Aorta (tissue), 5 donors: ENCODE measurements at regions of chr15 and their contacts with region 1.

Region 1: DNA sequence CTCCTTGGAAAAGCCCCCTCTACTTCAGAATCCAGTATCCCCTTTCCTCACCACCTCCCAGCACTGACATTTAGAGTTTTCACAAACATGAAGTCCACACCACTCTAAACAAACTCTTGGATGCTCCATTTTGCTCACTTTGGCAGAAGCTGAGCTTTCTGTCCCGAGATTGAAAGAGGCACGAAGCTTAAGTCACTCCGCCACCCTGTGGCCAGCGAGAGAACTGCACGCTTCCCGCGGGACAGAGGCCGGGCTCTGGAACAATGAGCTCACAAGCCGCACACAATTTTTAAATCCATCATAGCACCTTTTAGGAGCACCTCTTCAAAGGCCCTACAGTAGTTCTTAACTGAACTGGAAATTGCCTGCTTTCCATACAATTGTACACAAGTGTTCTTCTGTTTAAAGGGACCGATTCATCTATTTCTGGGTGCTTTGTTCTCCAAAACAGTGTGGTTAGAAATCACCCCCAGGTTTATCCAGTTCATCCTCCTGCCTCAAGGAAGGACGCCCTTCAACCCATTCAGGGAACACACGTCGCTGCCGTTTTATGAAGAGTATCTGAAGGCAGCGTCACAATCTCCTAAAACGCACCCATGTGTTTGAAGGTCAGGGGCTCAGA is 226.1 kb downstream of the VPS13C start:
- DNase-seq: peak; percentile 81 to 93
- ATAC-seq: peak; percentile 87
- H3K4me3 ChIP-seq: no peak overlapping the region
- H3K27ac ChIP-seq: no peak overlapping the region
- H3K4me1 ChIP-seq: no peaks in the 10 kb centered on the region
- H3K27me3 ChIP-seq: no peaks in the 10 kb centered on the region

Region 2: GRCh38 chr15:60507596-60508424 is 1326.4 kb before region 1 on chr15:
- intact Hi-C with region 1: loop called (anchors 10 kb)
- DNase-seq: no peak
- ATAC-seq: peak; percentile 86
- H3K4me3 ChIP-seq: no peak overlapping the region
- H3K27ac ChIP-seq: no peak overlapping the region
- H3K4me1 ChIP-seq: no peaks in the 10 kb centered on the region
- H3K27me3 ChIP-seq: no peaks in the 10 kb centered on the region

Region 3: GRCh38 chr15:60585743-60586708 is 1248.2 kb before region 1 on chr15:
- intact Hi-C with region 1: loop called (anchors 5 kb)
- DNase-seq: no peak
- ATAC-seq: peak; percentile 81
- H3K4me3 ChIP-seq: no peak overlapping the region
- H3K27ac ChIP-seq: no peak overlapping the region
- H3K4me1 ChIP-seq: peaks cover 0 to 3% of the 10 kb centered on the region in 2 donors
- H3K27me3 ChIP-seq: no peaks in the 10 kb centered on the region

Region 4: DNA sequence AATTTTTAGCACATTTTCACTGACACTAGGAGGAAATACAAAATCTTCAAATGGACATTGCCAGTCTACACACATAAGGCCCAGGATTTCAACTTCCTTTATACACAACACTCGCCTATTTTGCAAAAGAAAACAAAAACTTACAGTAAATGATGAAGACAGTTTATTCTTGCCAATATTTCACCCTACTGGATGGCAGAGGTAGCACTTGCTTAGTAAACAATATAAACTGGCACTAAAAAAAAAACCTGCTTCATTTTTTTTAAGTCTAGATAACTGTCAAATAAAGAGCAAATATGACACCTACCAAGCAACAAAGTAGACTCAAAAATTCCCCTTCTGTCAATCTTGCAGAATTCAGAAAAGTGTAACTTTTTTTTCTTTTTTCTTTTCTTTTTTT is 22.1 kb after region 1 on chr15:
- intact Hi-C with region 1: no loop called
- DNase-seq: no peak
- ATAC-seq: no peak
- H3K4me3 ChIP-seq: no peak overlapping the region
- H3K27ac ChIP-seq: no peak overlapping the region
- H3K4me1 ChIP-seq: no peaks in the 10 kb centered on the region
- H3K27me3 ChIP-seq: no peaks in the 10 kb centered on the region